Activated CD4-positive, alpha-beta T cell treated with anti-CD3 and anti-CD28 coated beads for 36 hours (primary cell): ENCODE measurements at regions of chr21 and their contacts with region 1.

Region 1: GRCh38 chr21:26732432-26733221 is 112.6 kb downstream of the ADAMTS1 start:
- DNase-seq: peak; percentile 54
- ATAC-seq: peak; percentile 44
- H3K4me3 Mint-ChIP-seq: no peak overlapping the region
- H3K27ac Mint-ChIP-seq: no peak overlapping the region
- H3K4me1 Mint-ChIP-seq: no peaks in the 10 kb centered on the region
- H3K27me3 Mint-ChIP-seq: peaks cover 2% of the 10 kb centered on the region

Region 2: DNA sequence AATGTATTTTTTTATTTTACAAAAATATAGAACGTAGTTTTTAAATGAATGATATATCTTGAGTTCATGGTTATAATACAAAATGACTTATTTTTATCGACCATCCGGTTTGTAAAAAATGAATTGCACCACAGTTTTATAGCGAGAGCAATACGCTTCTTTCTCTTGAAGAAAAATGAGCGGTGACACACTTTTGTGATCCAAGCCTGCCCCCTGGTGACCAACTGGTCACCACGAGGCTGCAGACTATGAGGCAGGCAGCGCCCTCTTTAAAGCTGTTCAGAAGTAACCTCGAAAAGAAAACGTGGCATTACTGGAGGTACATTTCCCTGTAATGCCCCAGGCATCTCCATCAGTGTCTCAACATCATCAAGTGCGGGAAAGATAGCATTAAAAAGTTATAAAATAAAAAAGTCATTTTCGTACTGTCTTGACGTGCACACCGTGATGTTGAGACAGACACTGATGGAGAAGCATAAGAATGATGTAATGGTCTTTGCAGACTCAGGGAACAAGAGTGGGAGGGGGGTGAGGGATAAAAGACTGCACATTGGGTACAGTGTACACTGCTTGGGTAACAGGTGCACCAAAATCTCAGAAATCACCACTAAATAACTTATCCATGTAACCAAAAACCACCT is 968.5 kb after region 1 on chr21:
- CTCF ChIA-PET with region 1: interaction called, 8 read pairs
- POLR2A ChIA-PET with region 1: no interaction called
- intact Hi-C with region 1: loop called in 1 of 2 experiments (anchors 5 kb)
- DNase-seq: peak; percentile 83
- ATAC-seq: peak; percentile 69
- H3K4me3 Mint-ChIP-seq: no peak overlapping the region
- H3K27ac Mint-ChIP-seq: no peak overlapping the region
- H3K4me1 Mint-ChIP-seq: no peaks in the 10 kb centered on the region
- H3K27me3 Mint-ChIP-seq: peaks cover 5% of the 10 kb centered on the region